Activated CD4-positive, alpha-beta memory T cell treated with anti-CD3 and anti-CD28 coated beads for 36 hours (primary cell): ENCODE measurements at regions of chr11 and their contacts with region 1.

Region 1: GRCh38 chr11:6234387-6235107 is at the start of gene FHIP1B:
- DNase-seq: peak; percentile 100
- H3K4me3 Mint-ChIP-seq: peak within 1 kb of the TSS; percentile 97
- H3K27ac Mint-ChIP-seq: peak within 1 kb of the TSS; percentile 91
- H3K4me1 Mint-ChIP-seq: peaks cover 38% of the 10 kb centered on the region
- H3K27me3 Mint-ChIP-seq: no peaks in the 10 kb centered on the region
- total RNA-seq, gene FHIP1B: 15.3 to 15.8 TPM

Region 2: DNA sequence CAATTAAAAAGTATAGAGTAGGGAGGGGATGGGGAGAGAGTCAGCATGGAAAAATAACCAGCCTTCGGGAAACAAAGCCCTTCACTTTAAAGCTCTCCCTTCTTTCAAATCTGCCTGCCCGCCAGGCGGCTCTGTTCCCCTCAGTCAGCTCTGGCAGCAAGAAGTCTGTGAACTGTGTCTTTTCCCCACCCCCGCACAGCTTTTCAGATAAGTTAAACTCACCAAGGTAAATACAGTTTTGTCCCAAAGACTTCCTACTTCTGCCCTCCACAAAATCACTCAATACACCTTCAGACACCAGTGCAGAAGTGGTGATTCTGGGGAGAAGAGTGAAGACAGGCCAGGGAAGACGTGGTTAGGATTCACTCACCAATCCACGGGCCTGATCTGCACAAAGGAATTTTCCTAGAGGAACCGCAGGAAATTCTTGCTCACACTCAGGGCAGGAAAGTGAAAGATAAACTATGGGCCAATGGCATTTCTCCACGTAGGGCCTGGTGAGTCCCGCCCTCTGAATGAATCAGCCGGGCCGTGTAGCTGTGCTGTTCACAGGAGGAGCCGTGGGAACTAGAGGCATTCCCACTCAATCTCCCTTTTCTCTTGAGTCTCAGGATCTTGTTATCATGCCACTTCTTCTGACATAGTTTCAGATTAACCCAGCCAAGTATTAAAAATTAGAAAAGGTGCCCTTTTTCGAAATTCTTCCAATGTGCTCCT is 549.7 kb before region 1 on chr11 and contains the start of gene TRIM5:
- CTCF ChIA-PET with region 1: no interaction called
- POLR2A ChIA-PET with region 1: no interaction called
- intact Hi-C with region 1: loop called (anchors 10 kb)
- DNase-seq: peak; percentile 89
- H3K4me3 Mint-ChIP-seq: peak within 1 kb of the TSS; percentile 92
- H3K27ac Mint-ChIP-seq: peak within 1 kb of the TSS; percentile 97
- H3K4me1 Mint-ChIP-seq: peaks cover 35% of the 10 kb centered on the region
- H3K27me3 Mint-ChIP-seq: no peaks in the 10 kb centered on the region
- total RNA-seq, gene TRIM5: 18.9 to 21.0 TPM

Region 3: DNA sequence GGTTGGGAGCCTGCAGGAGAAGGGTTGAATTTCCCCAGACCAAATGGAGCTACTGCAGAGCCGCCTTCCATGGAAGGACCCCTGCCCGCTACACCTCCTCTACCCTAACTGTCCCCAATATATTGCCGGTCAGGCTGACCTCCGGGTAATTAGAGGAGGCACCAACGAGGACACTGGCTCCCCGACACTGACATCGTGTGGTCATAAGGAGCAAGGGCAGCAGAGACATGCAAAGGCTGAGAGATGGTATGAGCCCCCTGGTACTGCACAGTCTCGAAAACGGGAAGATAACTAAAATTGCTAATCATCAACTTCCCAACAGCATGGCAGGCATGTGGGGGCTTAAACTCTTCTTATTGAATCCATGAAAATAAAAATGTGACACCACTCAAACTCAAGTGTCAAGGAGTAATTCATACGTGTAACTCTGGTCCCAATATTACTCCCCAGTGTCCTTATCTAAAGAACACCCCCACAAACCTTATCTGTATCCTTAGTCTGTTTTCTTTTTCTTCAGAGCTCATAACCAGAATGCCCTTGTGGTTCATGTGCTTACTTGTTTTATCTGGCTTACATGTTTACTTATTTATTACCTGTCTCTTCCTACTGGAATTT is 81.4 kb after region 1 on chr11:
- CTCF ChIA-PET with region 1: no interaction called
- POLR2A ChIA-PET with region 1: interaction called, 6 read pairs
- intact Hi-C with region 1: loop called (anchors 1 kb)
- DNase-seq: peak; percentile 53
- H3K4me3 Mint-ChIP-seq: no peak overlapping the region
- H3K27ac Mint-ChIP-seq: no peak overlapping the region
- H3K4me1 Mint-ChIP-seq: peaks cover 16% of the 10 kb centered on the region
- H3K27me3 Mint-ChIP-seq: peaks cover 32% of the 10 kb centered on the region

Region 4: DNA sequence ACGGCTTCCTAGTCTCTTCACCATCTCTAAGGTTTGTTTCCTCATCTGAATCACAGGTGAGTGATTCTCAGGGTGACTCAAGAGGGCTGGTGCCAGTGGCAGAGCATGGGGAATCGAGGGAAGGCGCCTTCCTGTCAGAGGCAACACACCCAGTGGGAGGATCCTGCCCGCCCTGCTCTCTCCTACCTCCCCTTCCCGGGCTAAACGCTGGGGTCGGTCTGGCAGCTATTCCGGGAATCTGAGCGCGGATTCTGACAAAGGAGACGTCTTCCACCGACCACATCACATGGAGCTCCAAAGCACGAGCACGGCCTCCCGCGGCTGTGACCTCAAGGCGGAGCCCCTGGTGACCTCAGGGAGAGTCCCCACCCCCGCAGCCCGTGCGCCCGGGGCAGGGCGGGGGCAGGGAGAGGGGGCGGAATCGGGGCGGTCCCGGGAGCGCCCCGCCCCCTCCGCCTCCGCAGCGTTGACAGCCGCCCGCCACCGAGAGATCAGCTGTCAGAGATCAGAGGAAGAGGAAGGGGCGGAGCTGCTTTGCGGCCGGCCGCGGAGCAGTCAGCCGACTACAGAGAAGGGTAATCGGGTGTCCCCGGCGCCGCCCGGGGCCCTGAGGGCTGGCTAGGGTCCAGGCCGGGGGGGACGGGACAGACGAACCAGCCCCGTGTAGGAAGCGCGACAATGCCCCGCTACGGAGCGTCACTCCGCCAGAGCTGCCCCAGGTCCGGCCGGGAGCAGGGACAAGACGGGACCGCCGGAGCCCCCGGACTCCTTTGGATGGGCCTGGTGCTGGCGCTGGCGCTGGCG is 155.6 kb after region 1 on chr11 and contains the start of gene SMPD1:
- CTCF ChIA-PET with region 1: no interaction called
- POLR2A ChIA-PET with region 1: no interaction called
- intact Hi-C with region 1: loop called (anchors 1 kb)
- DNase-seq: peak; percentile 96
- H3K4me3 Mint-ChIP-seq: peak within 1 kb of the TSS; percentile 85
- H3K27ac Mint-ChIP-seq: peak within 1 kb of the TSS; percentile 94
- H3K4me1 Mint-ChIP-seq: peaks cover 45% of the 10 kb centered on the region
- H3K27me3 Mint-ChIP-seq: no peaks in the 10 kb centered on the region
- total RNA-seq, gene SMPD1: 23.4 to 23.8 TPM

Region 5: DNA sequence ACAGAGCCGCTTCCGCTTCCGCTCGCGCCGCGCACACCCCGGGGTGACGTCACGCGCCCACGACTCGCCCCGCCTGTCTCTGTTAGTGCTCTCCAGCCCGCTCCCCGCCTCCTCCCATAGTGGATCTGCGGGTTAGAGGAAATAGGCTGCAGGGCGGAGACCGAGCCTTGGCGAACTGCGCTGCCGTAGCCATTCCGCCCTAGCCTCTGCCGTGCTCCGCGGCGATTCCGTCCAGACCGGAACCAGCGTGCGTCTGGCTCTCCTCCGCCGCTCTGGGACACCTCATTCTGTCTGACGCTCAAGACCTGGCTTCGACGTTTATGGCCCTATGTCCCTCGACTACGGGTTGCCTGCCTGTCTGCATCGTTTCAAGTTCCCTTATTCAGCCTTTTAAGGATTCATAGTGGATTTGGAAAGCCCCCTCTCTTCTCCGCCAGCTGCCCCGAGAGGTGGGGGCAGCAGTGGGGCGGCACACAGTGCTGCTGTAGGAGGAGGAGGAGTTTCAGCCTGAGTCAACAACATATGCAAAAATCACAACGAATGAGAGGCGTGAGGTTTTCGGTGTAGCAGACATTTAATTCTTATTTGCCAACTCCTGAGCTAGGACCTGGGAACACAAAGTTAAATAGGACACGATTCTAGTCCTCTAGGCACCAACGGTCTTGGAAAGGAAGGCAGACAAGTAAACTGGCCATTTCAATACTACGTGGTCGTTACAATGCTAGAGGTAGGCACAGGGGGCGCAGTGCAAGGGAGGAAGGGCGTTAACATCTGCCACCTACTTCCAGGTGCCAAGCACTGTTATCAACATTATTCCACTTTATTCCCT is 377.9 kb after region 1 on chr11 and contains the start of gene TAF10:
- CTCF ChIA-PET with region 1: no interaction called
- POLR2A ChIA-PET with region 1: no interaction called
- intact Hi-C with region 1: loop called (anchors 5 kb)
- DNase-seq: peak; percentile 96
- H3K4me3 Mint-ChIP-seq: peak within 1 kb of the TSS; percentile 86
- H3K27ac Mint-ChIP-seq: peak within 1 kb of the TSS; percentile 92
- H3K4me1 Mint-ChIP-seq: peaks cover 10% of the 10 kb centered on the region
- H3K27me3 Mint-ChIP-seq: no peaks in the 10 kb centered on the region
- total RNA-seq, gene TAF10: 158 to 165 TPM

Region 6: GRCh38 chr11:6746086-6746618 is 511.6 kb after region 1 on chr11:
- CTCF ChIA-PET with region 1: no interaction called
- POLR2A ChIA-PET with region 1: no interaction called
- intact Hi-C with region 1: loop called (anchors 5 kb)
- DNase-seq: peak; percentile 52
- H3K4me3 Mint-ChIP-seq: no peak overlapping the region
- H3K27ac Mint-ChIP-seq: no peak overlapping the region
- H3K4me1 Mint-ChIP-seq: peaks cover 32% of the 10 kb centered on the region
- H3K27me3 Mint-ChIP-seq: no peaks in the 10 kb centered on the region